ENCODE measurements at regions of chr11 and their contacts with region 1.

Region 1: GRCh38 chr11:64341851-64342791 is 2.1 kb downstream of the CCDC88B start:
- DNase-seq: peak; percentile 96
- ATAC-seq: peak; percentile 96
- H3K4me3 ChIP-seq: peak overlapping the region; percentile 65
- H3K27ac ChIP-seq: 0 out of 2 replicates have a peak overlapping the region, but pooled peaks have one; percentile 12
- H3K4me1 ChIP-seq: peaks cover 8% of the 10 kb centered on the region
- H3K27me3 ChIP-seq: no peaks in the 10 kb centered on the region
- CTCF ChIP-seq: peak; percentile 61

Region 2: GRCh38 chr11:64331557-64332371 is 10.4 kb before region 1 on chr11:
- CTCF ChIA-PET with region 1: interaction called, 13 read pairs
- POLR2A ChIA-PET with region 1: no interaction called
- intact Hi-C with region 1: no loop called
- DNase-seq: peak; percentile 96
- ATAC-seq: peak; percentile 56
- H3K4me3 ChIP-seq: peak overlapping the region; percentile 22; the same call in 1 of the 2 replicates
- H3K27ac ChIP-seq: peak overlapping the region; percentile 88
- H3K4me1 ChIP-seq: peaks cover 37% of the 10 kb centered on the region
- H3K27me3 ChIP-seq: no peaks in the 10 kb centered on the region
- CTCF ChIP-seq: peak; percentile 85

Measured in PC-3 (cell line).